B cell (primary cell): ENCODE measurements at regions of chr5 and their contacts with region 1.

Region 1: GRCh38 chr5:179974946-179975712 is 67.4 kb upstream of the TBC1D9B start:
- DNase-seq: peak; percentile 84
- ATAC-seq: peak; percentile 83
- H3K4me3 ChIP-seq: no peak overlapping the region
- H3K4me3 Mint-ChIP-seq: peak overlapping the region; percentile 31
- H3K27ac ChIP-seq: peak overlapping the region; percentile 22 to 58
- H3K27ac Mint-ChIP-seq: peak overlapping the region; percentile 92
- H3K4me1 ChIP-seq: peaks cover 29 to 41% of the 10 kb centered on the region in 2 donors
- H3K4me1 Mint-ChIP-seq: peaks cover 49% of the 10 kb centered on the region
- H3K27me3 ChIP-seq: no peaks in the 10 kb centered on the region
- H3K27me3 Mint-ChIP-seq: no peaks in the 10 kb centered on the region
- CTCF ChIP-seq: peak; percentile 74

Region 2: GRCh38 chr5:179123491-179124272 is 851.4 kb before region 1 on chr5:
- CTCF ChIA-PET with region 1: no interaction called
- POLR2A ChIA-PET with region 1: no interaction called
- intact Hi-C with region 1: no loop called
- DNase-seq: no peak
- ATAC-seq: no peak
- H3K4me3 ChIP-seq: no peak overlapping the region
- H3K4me3 Mint-ChIP-seq: no peak overlapping the region
- H3K27ac ChIP-seq: no peak overlapping the region
- H3K27ac Mint-ChIP-seq: no peak overlapping the region
- H3K4me1 ChIP-seq: no peaks in the 10 kb centered on the region
- H3K4me1 Mint-ChIP-seq: no peaks in the 10 kb centered on the region
- H3K27me3 ChIP-seq: no peaks in the 10 kb centered on the region
- H3K27me3 Mint-ChIP-seq: no peaks in the 10 kb centered on the region
- CTCF ChIP-seq: no peak

Region 3: DNA sequence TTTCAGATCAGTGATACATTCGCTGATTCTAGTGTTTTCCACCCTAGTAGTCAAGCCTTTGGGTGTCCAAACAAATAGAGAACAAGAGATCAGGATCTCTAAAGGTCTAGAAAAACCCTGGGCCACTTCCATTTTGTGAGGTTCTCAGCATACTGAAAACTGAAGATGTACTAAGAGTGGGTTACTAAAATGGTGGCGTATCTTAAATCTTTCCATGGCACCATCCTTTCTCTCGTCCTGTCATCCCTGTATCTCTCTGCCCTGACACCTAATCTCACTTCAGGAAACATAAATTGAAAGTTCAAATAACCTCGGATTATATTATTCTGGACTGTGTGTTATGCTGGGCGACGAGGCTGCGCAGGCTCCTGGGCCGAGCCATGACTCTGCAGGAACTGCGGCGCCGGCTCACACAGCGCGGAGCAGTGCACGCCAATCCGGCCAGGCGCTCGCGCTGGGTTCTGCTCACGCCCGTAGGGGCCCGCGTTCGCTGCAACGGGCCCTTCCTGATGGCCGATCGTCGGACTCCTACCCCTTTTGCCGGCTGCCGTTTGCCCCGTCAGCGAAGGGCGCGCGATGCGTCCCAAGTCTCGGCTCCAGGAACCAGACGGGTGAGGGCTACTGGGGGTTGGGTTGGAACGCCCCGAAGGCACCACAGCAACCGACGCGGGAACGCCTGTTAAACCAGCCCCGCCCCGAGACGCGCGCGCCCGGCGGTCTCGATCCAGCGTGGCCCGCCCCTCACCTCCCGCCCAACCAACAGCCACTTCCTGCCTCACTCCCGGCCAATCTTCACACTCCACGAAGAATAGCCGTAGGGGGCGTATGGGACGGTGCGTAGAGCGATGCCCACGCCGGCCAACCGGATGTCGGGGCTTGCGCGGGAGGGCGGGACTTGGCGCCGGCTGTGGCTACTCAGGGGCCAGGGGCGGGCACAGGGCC is 276.9 kb before region 1 on chr5:
- CTCF ChIA-PET with region 1: no interaction called
- POLR2A ChIA-PET with region 1: no interaction called
- intact Hi-C with region 1: loop called (anchors 1 kb)
- DNase-seq: peak; percentile 99
- ATAC-seq: peak; percentile 90
- H3K4me3 ChIP-seq: peak overlapping the region; percentile 65 to 95 (median 90)
- H3K4me3 Mint-ChIP-seq: peak overlapping the region; percentile 99
- H3K27ac ChIP-seq: peak overlapping the region; percentile 92 to 98
- H3K27ac Mint-ChIP-seq: peak overlapping the region; percentile 99
- H3K4me1 ChIP-seq: peaks cover 16 to 27% of the 10 kb centered on the region in 2 donors
- H3K4me1 Mint-ChIP-seq: peaks cover 30% of the 10 kb centered on the region
- H3K27me3 ChIP-seq: no peaks in the 10 kb centered on the region
- H3K27me3 Mint-ChIP-seq: no peaks in the 10 kb centered on the region
- CTCF ChIP-seq: no peak

Region 4: GRCh38 chr5:179806250-179807222 is 168.6 kb before region 1 on chr5 and contains the start of gene MGAT4B:
- CTCF ChIA-PET with region 1: interaction called, 35 read pairs
- POLR2A ChIA-PET with region 1: interaction called, 3 read pairs
- intact Hi-C with region 1: loop called (anchors 1 kb)
- DNase-seq: peak; percentile 83
- ATAC-seq: peak; percentile 80
- H3K4me3 ChIP-seq: peak within 1 kb of the TSS; percentile 7 to 72 (median 67)
- H3K4me3 Mint-ChIP-seq: peak within 1 kb of the TSS; percentile 71
- H3K27ac ChIP-seq: peak within 1 kb of the TSS; percentile 55 to 62
- H3K27ac Mint-ChIP-seq: peak within 1 kb of the TSS; percentile 73
- H3K4me1 ChIP-seq: peaks cover 28 to 36% of the 10 kb centered on the region in 2 donors
- H3K4me1 Mint-ChIP-seq: peaks cover 34% of the 10 kb centered on the region
- H3K27me3 ChIP-seq: no peaks in the 10 kb centered on the region
- H3K27me3 Mint-ChIP-seq: no peaks in the 10 kb centered on the region
- CTCF ChIP-seq: no peak
- total RNA-seq, gene MGAT4B: 139 and 165 TPM in 2 replicates

Region 5: GRCh38 chr5:179858586-179859427 is 116.3 kb before region 1 on chr5 and contains the start of gene MRNIP:
- CTCF ChIA-PET with region 1: interaction called, 4 read pairs
- POLR2A ChIA-PET with region 1: no interaction called
- intact Hi-C with region 1: loop called (anchors 1 kb)
- DNase-seq: peak; percentile 93
- ATAC-seq: peak; percentile 94
- H3K4me3 ChIP-seq: peak within 1 kb of the TSS; percentile 71 to 95 (median 90)
- H3K4me3 Mint-ChIP-seq: peak within 1 kb of the TSS; percentile 89
- H3K27ac ChIP-seq: peak within 1 kb of the TSS; percentile 63 to 80
- H3K27ac Mint-ChIP-seq: peak within 1 kb of the TSS; percentile 97
- H3K4me1 ChIP-seq: peaks cover 5 to 15% of the 10 kb centered on the region in 2 donors
- H3K4me1 Mint-ChIP-seq: peaks cover 31% of the 10 kb centered on the region
- H3K27me3 ChIP-seq: no peaks in the 10 kb centered on the region
- H3K27me3 Mint-ChIP-seq: no peaks in the 10 kb centered on the region
- CTCF ChIP-seq: no peak
- total RNA-seq, gene MRNIP: 152 and 160 TPM in 2 replicates

Region 6: DNA sequence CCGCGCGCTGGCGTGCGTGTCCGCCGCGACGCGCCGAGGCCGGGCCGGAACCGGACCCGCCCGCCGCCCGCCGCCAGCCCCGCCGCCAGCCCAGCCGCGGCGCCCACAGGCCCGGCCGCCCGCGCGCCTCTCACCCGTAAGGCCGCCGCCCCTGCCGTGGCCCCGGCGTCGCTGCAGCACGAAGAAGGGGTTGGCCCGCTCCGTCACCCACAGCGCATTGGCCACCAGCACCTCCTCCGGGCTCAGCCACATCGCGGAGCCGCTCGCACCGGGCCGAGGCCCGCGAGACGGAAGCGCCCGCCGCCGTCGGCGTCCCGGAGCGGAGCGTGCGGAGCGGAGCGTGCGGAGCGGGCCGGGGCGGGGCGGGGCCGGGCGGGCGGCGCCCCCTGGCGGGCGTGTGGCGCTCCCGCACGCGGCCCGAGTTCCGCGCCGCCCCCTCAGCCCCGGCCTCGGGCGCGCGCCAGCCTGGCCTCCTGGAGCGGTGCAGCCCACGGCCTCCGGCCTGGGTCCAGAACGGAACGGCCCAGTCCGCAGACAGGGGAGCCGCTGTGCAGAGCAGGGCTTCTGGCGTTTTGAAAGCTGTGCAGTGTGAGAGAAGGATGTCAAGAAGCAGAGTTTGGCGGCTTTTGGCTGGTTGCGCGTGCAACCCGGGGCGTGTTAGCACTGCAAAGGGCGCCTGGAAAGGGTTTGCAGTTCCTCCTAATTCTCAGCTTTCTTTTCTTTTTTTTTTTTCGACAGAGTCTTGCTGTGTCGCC is 67.4 kb before region 1 on chr5 and contains the start of gene TBC1D9B:
- CTCF ChIA-PET with region 1: interaction called, 24 read pairs
- POLR2A ChIA-PET with region 1: interaction called, 5 read pairs
- intact Hi-C with region 1: loop called (anchors 1 kb)
- DNase-seq: peak; percentile 88
- ATAC-seq: peak; percentile 88
- H3K4me3 ChIP-seq: peak within 1 kb of the TSS; percentile 47 to 61 (median 59)
- H3K4me3 Mint-ChIP-seq: peak within 1 kb of the TSS; percentile 92
- H3K27ac ChIP-seq: peak within 1 kb of the TSS in 1 of 2 donors; percentile 16
- H3K27ac Mint-ChIP-seq: peak within 1 kb of the TSS; percentile 94
- H3K4me1 ChIP-seq: peaks cover 13 to 24% of the 10 kb centered on the region in 2 donors
- H3K4me1 Mint-ChIP-seq: peaks cover 19% of the 10 kb centered on the region
- H3K27me3 ChIP-seq: no peaks in the 10 kb centered on the region
- H3K27me3 Mint-ChIP-seq: no peaks in the 10 kb centered on the region
- CTCF ChIP-seq: no peak
- total RNA-seq, gene TBC1D9B: 144 and 149 TPM in 2 replicates

Region 7: GRCh38 chr5:180071531-180072255 is 96.6 kb after region 1 on chr5 and contains the start of gene RNF130:
- CTCF ChIA-PET with region 1: no interaction called
- POLR2A ChIA-PET with region 1: no interaction called
- intact Hi-C with region 1: loop called (anchors 2 kb)
- DNase-seq: peak; percentile 90
- ATAC-seq: peak; percentile 75
- H3K4me3 ChIP-seq: peak within 1 kb of the TSS; percentile 66 to 85 (median 79)
- H3K4me3 Mint-ChIP-seq: peak within 1 kb of the TSS; percentile 89
- H3K27ac ChIP-seq: peak within 1 kb of the TSS; percentile 64 to 73
- H3K27ac Mint-ChIP-seq: peak within 1 kb of the TSS; percentile 84
- H3K4me1 ChIP-seq: peaks cover 25 to 30% of the 10 kb centered on the region in 2 donors
- H3K4me1 Mint-ChIP-seq: peaks cover 32% of the 10 kb centered on the region
- H3K27me3 ChIP-seq: no peaks in the 10 kb centered on the region
- H3K27me3 Mint-ChIP-seq: peaks cover 7% of the 10 kb centered on the region
- CTCF ChIP-seq: no peak
- total RNA-seq, gene RNF130: 25.8 and 28.4 TPM in 2 replicates